Heart left ventricle (tissue), 16 donors: ENCODE measurements at regions of chr22 and their contacts with region 1.

Region 1: DNA sequence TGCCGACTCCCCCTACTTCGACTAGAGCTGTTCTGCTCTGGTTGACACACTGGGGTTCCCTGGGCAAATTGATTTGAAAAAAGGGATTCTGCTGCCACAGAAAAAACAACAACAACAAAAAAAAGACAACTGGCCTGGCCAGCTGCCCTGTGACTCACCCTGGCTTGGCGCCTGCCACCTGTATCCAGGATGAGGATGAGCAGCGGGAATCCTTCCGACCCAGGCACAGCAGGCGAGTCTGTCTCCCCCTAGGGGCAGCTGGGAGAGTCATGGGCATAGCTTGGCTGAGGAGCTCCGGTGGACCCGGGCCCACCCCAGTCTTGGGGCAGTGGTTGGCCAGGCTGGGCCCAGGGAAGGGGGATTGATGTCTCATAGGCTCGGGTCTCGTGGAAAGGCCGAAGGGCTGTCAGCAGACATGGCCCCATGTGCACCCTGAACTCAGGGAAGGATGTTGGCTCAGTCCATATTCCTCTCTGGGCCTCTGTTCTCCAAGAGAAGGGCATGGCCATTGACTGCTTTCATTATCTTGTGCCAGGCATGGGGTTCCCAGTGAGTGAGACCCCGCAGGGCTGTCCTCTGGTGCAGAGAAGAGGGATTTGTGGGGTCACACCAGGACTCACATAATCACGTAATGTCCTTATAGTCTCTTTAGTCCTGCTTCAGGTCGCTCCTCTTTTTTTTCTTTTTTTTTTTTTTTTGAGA is 10.4 kb upstream of the SUN2 start:
- DNase-seq: peak in 1 of 5 donors; percentile 78
- ATAC-seq: peak in 3 of 4 donors; percentile 18 to 46 (median 46)
- H3K4me3 ChIP-seq: no peak overlapping the region
- H3K27ac ChIP-seq: no peak overlapping the region
- H3K4me1 ChIP-seq: peaks cover 0 to 3% (median 0%) of the 10 kb centered on the region in 12 donors
- H3K27me3 ChIP-seq: no peaks in the 10 kb centered on the region
- CTCF ChIP-seq: peak; percentile 33 to 71 (median 57)
- POLR2A ChIP-seq: no peak

Region 2: GRCh38 chr22:38705235-38706100 is 60.8 kb before region 1 on chr22 and contains the start of gene GTPBP1:
- intact Hi-C with region 1: no loop called
- DNase-seq: peak; percentile 98 to 100 (median 99)
- ATAC-seq: peak; percentile 88 to 96 (median 94)
- H3K4me3 ChIP-seq: peak within 1 kb of the TSS; percentile 71 to 99 (median 84)
- H3K27ac ChIP-seq: peak within 1 kb of the TSS; percentile 73 to 99 (median 94)
- H3K4me1 ChIP-seq: peaks cover 0 to 53% (median 37%) of the 10 kb centered on the region in 12 donors
- H3K27me3 ChIP-seq: no peaks in the 10 kb centered on the region
- CTCF ChIP-seq: peak in 4 of 12 donors; percentile 15 to 40 (median 30)
- POLR2A ChIP-seq: peak; percentile 94 to 97
- total RNA-seq, gene GTPBP1: 23.7 to 45.3 (median 28.1) TPM

Region 3: GRCh38 chr22:38824585-38824984 is 58.4 kb after region 1 on chr22:
- intact Hi-C with region 1: no loop called
- DNase-seq: peak in 4 of 5 donors; percentile 51 to 72 (median 60)
- ATAC-seq: peak in 3 of 4 donors; percentile 79 to 89 (median 82)
- H3K4me3 ChIP-seq: no peak overlapping the region
- H3K27ac ChIP-seq: no peak overlapping the region
- H3K4me1 ChIP-seq: no peaks in the 10 kb centered on the region
- H3K27me3 ChIP-seq: no peaks in the 10 kb centered on the region
- CTCF ChIP-seq: peak in 10 of 12 donors; percentile 9 to 56 (median 34)
- POLR2A ChIP-seq: no peak

Region 4: DNA sequence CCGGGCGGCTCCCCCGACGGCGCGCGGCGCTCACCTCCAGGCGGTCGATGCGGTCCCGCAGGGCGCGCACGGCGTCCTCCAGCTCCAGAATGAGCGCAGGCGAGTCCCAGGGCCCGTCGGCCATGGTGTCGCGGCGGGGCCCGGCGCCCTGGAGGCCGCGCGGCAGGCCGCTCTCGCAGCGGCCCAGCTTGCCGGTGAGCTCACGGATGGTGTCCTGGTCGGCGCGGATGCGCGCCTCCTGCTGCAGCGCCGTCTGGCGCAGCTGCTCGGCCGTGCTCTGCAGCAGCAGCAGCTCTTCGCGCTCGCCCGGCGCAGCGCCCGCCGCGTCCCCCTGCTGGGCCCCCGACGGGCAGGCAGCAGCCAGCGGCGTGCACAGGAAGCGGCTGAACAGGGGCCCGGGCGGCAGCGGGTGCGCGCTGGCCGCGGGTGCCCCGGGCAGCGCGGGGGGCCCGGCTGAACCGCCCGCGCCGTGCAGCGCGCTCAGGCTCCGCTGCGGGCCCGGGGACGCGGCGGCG is 77.0 kb after region 1 on chr22:
- intact Hi-C with region 1: loop called in 2 of 10 experiments (anchors 1 to 10 kb)
- DNase-seq: peak; percentile 34 to 77 (median 55)
- ATAC-seq: peak; percentile 56 to 76 (median 74)
- H3K4me3 ChIP-seq: peak overlapping the region; percentile 40 to 69 (median 55)
- H3K27ac ChIP-seq: peak overlapping the region in 10 of 12 donors; percentile 53 to 80 (median 64)
- H3K4me1 ChIP-seq: peaks cover 0 to 27% (median 9%) of the 10 kb centered on the region in 12 donors
- H3K27me3 ChIP-seq: peaks cover 0 to 45% (median 2%) of the 10 kb centered on the region in 9 donors
- CTCF ChIP-seq: peak in 11 of 12 donors; percentile 10 to 54 (median 32)
- POLR2A ChIP-seq: no peak

Region 5: GRCh38 chr22:38862375-38863329 is 96.4 kb after region 1 on chr22:
- intact Hi-C with region 1: loop called in 5 of 10 experiments (anchors 5 kb)
- DNase-seq: peak in 3 of 5 donors; percentile 44 to 69 (median 66)
- ATAC-seq: peak in 3 of 4 donors; percentile 30 to 35 (median 31)
- H3K4me3 ChIP-seq: no peak overlapping the region
- H3K27ac ChIP-seq: peak overlapping the region in 2 of 12 donors; percentile 19 to 82
- H3K4me1 ChIP-seq: peaks cover 10 to 63% (median 38%) of the 10 kb centered on the region in 12 donors
- H3K27me3 ChIP-seq: no peaks in the 10 kb centered on the region
- CTCF ChIP-seq: no peak
- POLR2A ChIP-seq: no peak

Region 6: DNA sequence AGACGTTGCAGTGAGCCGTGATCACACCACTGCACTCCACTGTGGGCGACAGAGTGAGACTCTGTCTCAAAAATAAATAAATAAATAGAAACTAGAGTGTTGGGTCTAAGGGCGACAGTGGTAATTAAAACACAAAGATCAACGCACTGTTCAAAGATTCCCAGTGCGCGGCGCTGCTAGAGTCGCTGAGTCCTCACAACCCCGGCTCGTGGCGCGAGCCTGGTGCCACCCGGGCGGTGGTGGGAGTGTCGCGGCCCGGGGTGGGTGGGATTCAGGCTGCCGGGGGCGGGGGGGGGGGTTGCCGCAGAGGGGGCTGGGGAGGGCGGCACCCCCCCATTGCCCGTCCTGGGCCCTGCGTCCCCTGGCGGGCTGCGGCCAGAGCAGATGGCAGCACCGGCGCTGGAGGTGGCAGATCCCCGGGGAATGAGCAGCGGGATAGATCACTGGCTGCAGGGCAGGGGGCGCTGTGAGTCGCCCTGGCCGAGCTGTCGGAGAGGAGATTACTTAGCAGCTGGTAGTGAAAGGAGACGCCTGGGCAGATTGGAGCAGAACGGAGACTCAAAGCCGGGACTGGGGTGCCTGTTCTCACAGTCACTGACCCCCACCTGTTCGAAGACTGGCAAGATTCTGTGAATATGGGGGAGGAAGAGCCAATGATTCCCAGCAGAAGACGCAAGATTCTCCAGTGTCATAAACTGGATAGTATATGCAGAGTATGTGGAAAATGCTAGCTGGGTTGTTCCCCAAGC is 161.0 kb after region 1 on chr22:
- intact Hi-C with region 1: no loop called
- DNase-seq: peak; percentile 67 to 88 (median 81)
- ATAC-seq: peak; percentile 49 to 84 (median 76)
- H3K4me3 ChIP-seq: peak overlapping the region in 9 of 12 donors; percentile 29 to 45 (median 39)
- H3K27ac ChIP-seq: peak overlapping the region in 11 of 12 donors; percentile 10 to 75 (median 66)
- H3K4me1 ChIP-seq: peaks cover 0 to 33% (median 19%) of the 10 kb centered on the region in 12 donors
- H3K27me3 ChIP-seq: peaks cover 0 to 15% (median 0%) of the 10 kb centered on the region in 9 donors
- CTCF ChIP-seq: peak; percentile 36 to 84 (median 66)
- POLR2A ChIP-seq: no peak

Region 7: DNA sequence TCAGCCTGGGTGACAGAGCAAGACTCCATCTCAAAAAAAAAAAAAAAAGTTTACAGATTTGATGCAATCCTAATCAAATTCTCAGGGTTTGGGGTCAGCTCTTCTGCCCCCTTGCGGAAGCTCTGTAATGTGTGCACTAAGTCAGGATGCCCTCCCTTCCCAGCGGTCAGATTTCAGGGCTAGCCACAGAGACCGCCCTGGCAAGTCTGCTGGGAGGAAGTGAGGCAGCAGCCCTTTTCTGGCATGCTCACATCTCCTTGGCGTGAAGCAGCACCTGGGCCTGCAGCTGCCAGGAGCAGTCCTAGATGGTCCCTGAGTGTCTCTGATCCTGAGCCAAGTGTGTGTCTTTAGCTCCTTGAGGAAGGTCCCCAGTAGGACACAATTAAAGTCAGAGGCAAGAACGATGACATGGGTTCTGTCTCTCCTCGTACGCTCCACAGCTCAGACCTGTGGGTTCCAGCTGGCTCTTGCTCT is 237.0 kb after region 1 on chr22:
- intact Hi-C with region 1: loop called in 7 of 10 experiments (anchors 2 to 10 kb)
- DNase-seq: peak; percentile 67 to 81 (median 75)
- ATAC-seq: peak; percentile 81 to 94 (median 92)
- H3K4me3 ChIP-seq: no peak overlapping the region
- H3K27ac ChIP-seq: no peak overlapping the region
- H3K4me1 ChIP-seq: peaks cover 0 to 12% (median 1%) of the 10 kb centered on the region in 12 donors
- H3K27me3 ChIP-seq: peaks cover 0 to 5% (median 0%) of the 10 kb centered on the region in 9 donors
- CTCF ChIP-seq: peak; percentile 63 to 86 (median 75)
- POLR2A ChIP-seq: no peak

Region 8: GRCh38 chr22:39123751-39124601 is 357.7 kb after region 1 on chr22:
- intact Hi-C with region 1: loop called in 5 of 10 experiments (anchors 5 to 10 kb)
- DNase-seq: no peak
- ATAC-seq: peak in 1 of 4 donors; percentile 48
- H3K4me3 ChIP-seq: no peak overlapping the region
- H3K27ac ChIP-seq: no peak overlapping the region
- H3K4me1 ChIP-seq: peaks cover 0 to 4% (median 0%) of the 10 kb centered on the region in 12 donors
- H3K27me3 ChIP-seq: no peaks in the 10 kb centered on the region
- CTCF ChIP-seq: no peak
- POLR2A ChIP-seq: no peak

Region 9: GRCh38 chr22:39135090-39135896 is 369.1 kb after region 1 on chr22:
- intact Hi-C with region 1: loop called in 1 of 10 experiments (anchors 10 kb)
- DNase-seq: peak; percentile 49 to 82 (median 68)
- ATAC-seq: peak in 3 of 4 donors; percentile 66 to 75 (median 73)
- H3K4me3 ChIP-seq: no peak overlapping the region
- H3K27ac ChIP-seq: peak overlapping the region in 1 of 12 donors; percentile 57
- H3K4me1 ChIP-seq: peaks cover 0 to 32% (median 15%) of the 10 kb centered on the region in 12 donors
- H3K27me3 ChIP-seq: no peaks in the 10 kb centered on the region
- CTCF ChIP-seq: peak in 11 of 12 donors; percentile 24 to 67 (median 44)
- POLR2A ChIP-seq: no peak

Region 10: GRCh38 chr22:39319270-39320022 is 553.2 kb after region 1 on chr22 and contains the start of gene RPL3:
- intact Hi-C with region 1: loop called in 1 of 10 experiments (anchors 10 kb)
- DNase-seq: peak; percentile 96 to 98 (median 97)
- ATAC-seq: peak; percentile 87 to 94 (median 90)
- H3K4me3 ChIP-seq: peak within 1 kb of the TSS; percentile 58 to 93 (median 78)
- H3K27ac ChIP-seq: peak within 1 kb of the TSS; percentile 81 to 100 (median 96)
- H3K4me1 ChIP-seq: peaks cover 22 to 50% (median 42%) of the 10 kb centered on the region in 12 donors
- H3K27me3 ChIP-seq: no peaks in the 10 kb centered on the region
- CTCF ChIP-seq: peak in 6 of 12 donors; percentile 9 to 39 (median 27)
- POLR2A ChIP-seq: peak in 1 of 2 donors; percentile 79
- total RNA-seq, gene RPL3: 237 to 911 (median 336) TPM